Sigmoid colon (tissue), 7 donors: ENCODE measurements at regions of chr12 and their contacts with region 1.

Region 1: DNA sequence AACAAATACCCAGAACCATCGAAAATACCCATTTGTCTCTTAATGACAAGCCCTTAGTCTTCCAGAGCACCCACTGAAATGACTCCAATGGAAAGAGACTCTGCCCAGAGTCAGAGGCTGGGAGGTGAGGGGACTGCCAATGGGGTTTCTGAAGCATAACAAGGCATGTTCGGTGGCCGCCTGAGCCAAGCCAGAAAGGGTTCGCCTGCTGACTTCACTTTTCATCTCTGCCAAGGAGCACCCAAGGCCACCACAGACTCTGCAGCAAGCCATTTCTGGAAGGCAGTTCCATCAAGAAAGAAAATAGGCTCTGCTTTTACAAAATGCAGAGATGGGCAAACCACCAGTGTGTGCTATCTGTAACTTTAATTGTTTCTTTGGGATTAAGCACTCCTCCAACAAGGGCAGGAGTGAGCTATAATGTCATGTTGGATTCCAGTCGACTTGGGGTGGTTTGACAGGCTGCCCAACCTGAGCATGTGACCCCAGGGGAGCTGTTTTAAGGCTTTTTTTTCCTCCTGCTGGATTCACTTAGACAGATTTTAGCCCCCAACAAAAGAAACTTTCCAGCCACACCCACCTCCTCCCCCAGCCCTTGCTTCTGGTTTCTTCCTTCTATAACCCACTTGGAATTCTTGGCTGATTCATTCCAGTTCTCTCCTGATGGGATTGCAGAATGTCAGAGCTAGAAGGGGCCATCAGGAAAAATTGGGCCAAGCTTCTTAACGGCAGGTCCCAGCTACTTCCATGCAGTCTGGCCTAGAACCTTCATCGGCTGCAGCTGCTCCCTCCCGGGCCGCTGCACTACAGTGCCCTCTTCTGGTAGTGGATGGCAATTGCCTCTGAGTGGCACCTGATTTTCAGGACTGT is 24.1 kb downstream of the CKAP4 start:
- DNase-seq: peak; percentile 86
- H3K4me3 ChIP-seq: no peak overlapping the region
- H3K27ac ChIP-seq: peak overlapping the region in 1 of 4 donors; percentile 38
- H3K4me1 ChIP-seq: peaks cover 0 to 9% (median 2%) of the 10 kb centered on the region in 4 donors
- H3K27me3 ChIP-seq: no peaks in the 10 kb centered on the region
- CTCF ChIP-seq: peak; percentile 74 to 96 (median 88)
- EP300 ChIP-seq: no peak
- POLR2A ChIP-seq: no peak

Region 2: DNA sequence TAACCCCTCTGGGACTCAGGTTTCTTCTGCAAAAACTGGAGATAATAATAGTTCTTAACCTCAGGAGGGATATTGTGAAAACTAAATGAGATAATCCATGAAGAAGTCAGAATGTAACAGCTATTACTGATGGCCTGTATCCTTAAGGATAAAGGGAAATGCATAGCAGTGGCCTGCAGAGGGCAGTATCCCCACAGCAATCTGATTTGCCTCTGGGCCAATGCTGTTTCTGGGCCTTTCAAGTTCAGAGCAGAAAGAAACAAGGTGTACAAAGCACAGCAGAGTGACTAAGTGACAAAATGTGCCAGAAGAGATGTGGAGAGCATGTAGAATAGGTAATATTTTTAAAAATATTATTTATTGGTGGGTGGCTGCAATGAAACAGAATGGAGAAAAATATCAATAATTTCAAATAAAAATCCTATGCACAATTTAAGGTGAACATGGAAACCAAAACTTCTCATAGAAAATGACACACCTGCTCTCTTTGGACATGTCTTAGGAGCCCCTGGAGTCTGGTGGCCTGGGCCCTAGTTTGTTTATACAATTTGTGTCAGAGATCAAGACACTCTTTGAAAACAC is 803.0 kb before region 1 on chr12:
- intact Hi-C with region 1: loop called (anchors 2 kb)
- DNase-seq: peak; percentile 83
- H3K4me3 ChIP-seq: no peak overlapping the region
- H3K27ac ChIP-seq: no peak overlapping the region
- H3K4me1 ChIP-seq: peaks cover 0 to 13% (median 6%) of the 10 kb centered on the region in 4 donors
- H3K27me3 ChIP-seq: no peaks in the 10 kb centered on the region
- CTCF ChIP-seq: peak; percentile 85 to 93 (median 88)
- EP300 ChIP-seq: no peak
- POLR2A ChIP-seq: no peak

Region 3: DNA sequence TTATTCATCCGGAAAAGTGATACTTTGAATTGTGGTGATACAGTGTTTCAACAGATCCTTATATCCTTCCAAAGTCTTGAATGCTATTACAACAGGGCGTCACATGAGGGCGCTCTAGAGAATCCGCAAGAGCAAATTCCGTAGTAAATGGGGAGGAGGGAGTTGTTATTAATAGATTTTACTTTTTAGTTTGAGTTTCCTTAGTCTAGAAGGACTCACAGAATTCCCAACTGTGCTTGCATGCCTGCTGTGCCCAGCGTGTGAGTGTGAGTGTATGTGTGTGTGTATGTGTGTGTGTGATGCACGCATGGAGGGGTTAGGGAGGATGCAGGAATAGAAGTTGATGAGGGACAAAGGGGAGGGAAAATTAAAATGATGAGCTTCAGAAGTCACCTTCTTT is 518.0 kb before region 1 on chr12:
- intact Hi-C with region 1: loop called (anchors 5 kb)
- DNase-seq: peak; percentile 69
- H3K4me3 ChIP-seq: no peak overlapping the region
- H3K27ac ChIP-seq: no peak overlapping the region
- H3K4me1 ChIP-seq: no peaks in the 10 kb centered on the region
- H3K27me3 ChIP-seq: no peaks in the 10 kb centered on the region
- CTCF ChIP-seq: peak; percentile 24 to 62 (median 50)
- EP300 ChIP-seq: no peak
- POLR2A ChIP-seq: no peak

Region 4: GRCh38 chr12:106136263-106136662 is 87.5 kb before region 1 on chr12:
- intact Hi-C with region 1: loop called (anchors 5 kb)
- DNase-seq: peak; percentile 93
- H3K4me3 ChIP-seq: peak overlapping the region in 3 of 4 donors; percentile 13 to 77 (median 70)
- H3K27ac ChIP-seq: peak overlapping the region; percentile 14 to 90 (median 74)
- H3K4me1 ChIP-seq: peaks cover 0 to 76% (median 36%) of the 10 kb centered on the region in 4 donors
- H3K27me3 ChIP-seq: no peaks in the 10 kb centered on the region
- CTCF ChIP-seq: peak; percentile 71 to 82 (median 80)
- EP300 ChIP-seq: no peak
- POLR2A ChIP-seq: no peak

Region 5: DNA sequence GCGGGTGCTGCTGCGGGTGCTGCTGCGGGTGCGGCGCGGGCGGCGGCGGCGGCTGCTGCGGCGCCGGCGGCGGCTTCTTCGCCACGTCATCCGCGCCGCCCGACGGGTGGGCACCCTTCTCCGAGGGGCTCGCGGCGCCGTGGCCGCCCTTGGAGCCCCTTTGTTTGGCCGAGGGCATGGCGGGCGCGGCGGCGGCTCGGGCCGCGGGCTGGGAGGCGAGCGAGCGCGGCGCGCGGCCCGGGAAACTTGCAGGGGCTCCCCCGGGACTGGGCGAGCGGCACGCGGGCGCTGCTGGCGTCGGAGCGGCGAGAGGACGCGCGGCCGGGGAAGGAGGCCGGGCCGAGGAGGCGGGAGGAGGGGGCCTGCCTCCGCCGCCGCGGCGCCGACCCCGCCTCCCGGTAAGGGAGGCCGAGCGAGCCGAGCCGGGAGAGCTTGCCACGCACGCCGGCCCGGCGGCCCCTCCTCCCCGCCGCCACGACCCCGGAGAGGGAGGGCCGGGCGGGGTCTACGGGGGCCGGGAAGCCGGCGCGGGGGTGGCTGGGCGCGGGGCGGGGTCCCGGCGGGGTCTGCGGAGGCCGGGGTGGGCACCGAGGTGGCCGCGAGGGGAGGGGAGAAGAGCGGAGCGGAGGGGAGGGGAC is 24.1 kb after region 1 on chr12 and contains the start of gene CKAP4:
- intact Hi-C with region 1: loop called (anchors 2 kb)
- DNase-seq: peak; percentile 90
- H3K4me3 ChIP-seq: peak within 1 kb of the TSS; percentile 84 to 92 (median 90)
- H3K27ac ChIP-seq: peak within 1 kb of the TSS; percentile 98 to 100 (median 98)
- H3K4me1 ChIP-seq: peaks cover 0 to 42% (median 42%) of the 10 kb centered on the region in 4 donors
- H3K27me3 ChIP-seq: no peaks in the 10 kb centered on the region
- CTCF ChIP-seq: no peak
- EP300 ChIP-seq: no peak
- POLR2A ChIP-seq: no peak
- total RNA-seq, gene CKAP4: 23.2 to 35.7 (median 25.5) TPM

Region 6: DNA sequence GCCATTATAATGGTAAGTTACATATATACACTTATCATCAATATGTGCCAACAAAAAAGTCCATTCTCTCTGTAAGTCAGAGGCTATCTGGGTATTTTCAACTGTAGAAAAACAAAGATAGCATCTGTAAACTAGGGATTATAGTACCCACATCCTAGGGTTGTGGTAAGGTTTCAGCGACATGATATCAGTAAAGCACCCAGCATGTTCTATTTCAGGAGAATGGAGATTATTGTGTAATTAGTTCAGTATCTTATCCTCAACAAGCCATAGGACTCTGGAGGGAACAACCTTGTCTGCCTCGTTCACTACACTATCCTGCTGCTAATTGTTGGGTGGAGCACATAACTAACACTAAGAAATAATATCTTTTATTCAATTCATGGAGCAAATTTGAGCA is 43.8 kb after region 1 on chr12:
- intact Hi-C with region 1: no loop called
- DNase-seq: no peak
- H3K4me3 ChIP-seq: no peak overlapping the region
- H3K27ac ChIP-seq: no peak overlapping the region
- H3K4me1 ChIP-seq: no peaks in the 10 kb centered on the region
- H3K27me3 ChIP-seq: no peaks in the 10 kb centered on the region
- CTCF ChIP-seq: no peak
- EP300 ChIP-seq: no peak
- POLR2A ChIP-seq: no peak

Region 7: DNA sequence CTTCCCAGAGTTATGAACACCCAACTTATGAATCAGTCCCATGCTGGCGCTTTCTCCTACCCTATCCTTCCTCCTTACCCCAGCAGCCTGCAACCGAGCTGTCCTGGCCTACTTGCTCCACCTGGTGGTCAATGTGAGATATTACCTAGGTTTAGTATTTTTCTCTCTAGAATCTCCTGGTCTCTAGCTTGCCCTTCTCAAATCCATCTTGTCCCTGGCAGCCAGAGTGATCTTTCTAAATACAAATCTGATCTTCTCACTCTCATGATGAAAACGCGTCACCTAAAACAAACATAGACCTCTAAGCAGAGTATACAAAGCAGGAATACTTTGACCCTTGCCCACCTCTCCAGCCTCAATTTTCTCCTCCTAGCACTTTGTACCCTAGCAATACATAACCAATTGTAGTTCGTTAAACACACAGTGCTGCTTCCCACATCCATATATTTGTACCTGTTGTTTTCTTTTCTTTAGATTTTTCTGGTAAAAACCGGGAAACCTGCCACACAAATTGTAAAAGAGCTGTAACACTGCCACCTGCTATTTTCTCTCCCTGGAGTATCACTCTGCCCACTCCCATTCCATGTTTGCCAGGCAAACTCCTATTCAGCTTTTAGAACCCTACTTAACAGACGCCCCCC is 58.9 kb after region 1 on chr12:
- intact Hi-C with region 1: loop called (anchors 1 kb)
- DNase-seq: peak; percentile 67
- H3K4me3 ChIP-seq: no peak overlapping the region
- H3K27ac ChIP-seq: no peak overlapping the region
- H3K4me1 ChIP-seq: no peaks in the 10 kb centered on the region
- H3K27me3 ChIP-seq: no peaks in the 10 kb centered on the region
- CTCF ChIP-seq: peak; percentile 44 to 61 (median 60)
- EP300 ChIP-seq: no peak
- POLR2A ChIP-seq: no peak

Region 8: GRCh38 chr12:106345739-106346138 is 122.0 kb after region 1 on chr12:
- intact Hi-C with region 1: loop called (anchors 5 kb)
- DNase-seq: no peak
- H3K4me3 ChIP-seq: no peak overlapping the region
- H3K27ac ChIP-seq: no peak overlapping the region
- H3K4me1 ChIP-seq: peaks cover 0 to 32% (median 29%) of the 10 kb centered on the region in 4 donors
- H3K27me3 ChIP-seq: no peaks in the 10 kb centered on the region
- CTCF ChIP-seq: no peak
- EP300 ChIP-seq: no peak
- POLR2A ChIP-seq: no peak

Region 9: DNA sequence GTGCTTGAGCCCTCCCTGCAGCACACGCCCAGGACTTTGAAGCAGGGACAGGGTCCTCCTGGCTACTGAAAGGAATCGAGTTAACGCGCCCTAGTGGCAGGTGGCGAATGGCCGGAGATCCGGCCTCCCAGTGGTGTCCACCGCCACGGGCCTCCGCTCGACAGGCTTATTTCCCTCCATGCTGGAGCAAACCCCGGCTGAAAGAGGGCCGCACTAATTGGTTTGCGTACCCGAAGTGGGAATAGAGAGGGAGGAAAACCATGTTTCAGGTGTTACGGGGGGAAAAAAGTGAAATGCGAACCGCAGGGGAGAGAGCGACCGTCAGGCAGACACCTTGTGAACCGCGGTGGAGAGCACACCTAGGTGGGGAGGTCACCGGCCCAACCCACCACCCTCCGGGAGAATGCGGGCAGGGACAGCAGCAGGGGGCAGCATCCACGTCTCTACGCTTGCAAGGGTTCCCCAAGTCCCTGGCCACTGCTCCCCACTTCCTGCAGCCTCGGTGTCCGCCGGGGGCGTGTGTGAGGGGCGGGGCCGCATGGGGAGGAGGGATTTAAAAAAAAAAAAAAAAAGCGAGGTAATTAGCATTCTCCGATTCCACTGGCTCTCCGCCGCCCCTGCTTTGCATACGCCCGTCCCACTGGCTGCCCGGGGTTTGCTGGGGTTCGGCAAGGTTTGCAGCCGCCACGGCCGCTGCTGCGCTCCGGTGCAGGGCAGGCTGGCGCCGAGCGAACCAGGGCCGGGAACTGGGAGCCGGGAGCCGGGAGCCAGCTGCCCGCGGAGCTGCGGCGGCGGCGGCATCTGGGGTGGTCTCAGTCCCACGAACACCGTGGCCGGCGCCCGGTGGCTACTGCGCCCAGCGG is 1094.3 kb after region 1 on chr12:
- intact Hi-C with region 1: no loop called
- DNase-seq: no peak
- H3K4me3 ChIP-seq: peak overlapping the region in 3 of 4 donors; percentile 19 to 54 (median 49)
- H3K27ac ChIP-seq: peak overlapping the region in 1 of 4 donors; percentile 56
- H3K4me1 ChIP-seq: peaks cover 0 to 40% (median 29%) of the 10 kb centered on the region in 4 donors
- H3K27me3 ChIP-seq: peaks cover 21 to 57% (median 56%) of the 10 kb centered on the region in 3 donors
- CTCF ChIP-seq: peak in 1 of 4 experiments; percentile 21
- EP300 ChIP-seq: no peak
- POLR2A ChIP-seq: no peak